ENCODE measurements at regions of chr7 and their contacts with region 1.

Region 1: DNA sequence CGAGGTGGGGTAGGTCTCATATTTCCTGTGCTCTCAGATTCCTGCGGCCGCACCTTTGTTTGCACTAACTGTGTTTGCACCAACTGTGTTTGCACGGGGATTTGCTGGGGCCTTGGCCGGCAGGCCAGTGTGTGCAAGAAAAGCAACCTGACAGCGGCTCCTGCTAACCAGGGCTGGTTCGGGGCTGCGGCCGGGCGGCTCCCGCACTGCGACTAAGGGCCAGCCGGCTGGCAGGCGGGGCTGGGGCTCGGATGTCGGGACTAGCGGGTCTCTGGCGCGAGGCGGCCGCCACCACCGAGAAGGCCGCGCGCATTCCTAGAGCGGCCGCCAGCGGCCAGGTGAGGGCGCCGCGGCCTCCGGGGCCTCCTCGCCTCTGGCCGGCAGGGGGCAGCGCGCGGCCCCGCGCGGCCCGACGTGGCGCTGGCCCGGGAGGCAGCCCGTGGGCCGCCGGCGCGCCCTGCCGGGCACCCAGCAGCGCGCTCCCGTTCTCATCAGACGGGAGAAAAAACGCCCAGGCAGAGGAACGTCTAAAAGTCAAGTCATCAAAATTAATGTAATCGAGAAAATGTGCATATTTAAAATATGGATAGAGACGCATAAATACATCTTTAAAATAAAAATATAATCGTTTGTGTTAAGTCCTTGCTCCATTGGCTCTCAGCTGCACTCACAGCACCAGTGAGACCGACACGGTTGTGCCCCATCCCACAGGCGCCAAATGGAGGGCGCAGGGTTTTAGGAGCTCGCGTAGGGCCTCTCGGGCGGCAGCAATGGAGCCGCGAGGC is 38.5 kb downstream of the ZNF777 start:
- DNase-seq: peak; percentile 72 to 80 (median 76)
- ATAC-seq: peak; percentile 94 to 98 (median 97)
- H3K4me3 ChIP-seq: peak overlapping the region; percentile 43 to 64 (median 55)
- H3K27ac ChIP-seq: peak overlapping the region in 1 of 3 donors; percentile 53
- H3K4me1 ChIP-seq: peaks cover 0 to 6% (median 0%) of the 10 kb centered on the region in 4 donors
- H3K27me3 ChIP-seq: no peaks in the 10 kb centered on the region
- CTCF ChIP-seq: peak; percentile 53 to 99 (median 70)
- POLR2A ChIP-seq: peak; percentile 21

Region 2: DNA sequence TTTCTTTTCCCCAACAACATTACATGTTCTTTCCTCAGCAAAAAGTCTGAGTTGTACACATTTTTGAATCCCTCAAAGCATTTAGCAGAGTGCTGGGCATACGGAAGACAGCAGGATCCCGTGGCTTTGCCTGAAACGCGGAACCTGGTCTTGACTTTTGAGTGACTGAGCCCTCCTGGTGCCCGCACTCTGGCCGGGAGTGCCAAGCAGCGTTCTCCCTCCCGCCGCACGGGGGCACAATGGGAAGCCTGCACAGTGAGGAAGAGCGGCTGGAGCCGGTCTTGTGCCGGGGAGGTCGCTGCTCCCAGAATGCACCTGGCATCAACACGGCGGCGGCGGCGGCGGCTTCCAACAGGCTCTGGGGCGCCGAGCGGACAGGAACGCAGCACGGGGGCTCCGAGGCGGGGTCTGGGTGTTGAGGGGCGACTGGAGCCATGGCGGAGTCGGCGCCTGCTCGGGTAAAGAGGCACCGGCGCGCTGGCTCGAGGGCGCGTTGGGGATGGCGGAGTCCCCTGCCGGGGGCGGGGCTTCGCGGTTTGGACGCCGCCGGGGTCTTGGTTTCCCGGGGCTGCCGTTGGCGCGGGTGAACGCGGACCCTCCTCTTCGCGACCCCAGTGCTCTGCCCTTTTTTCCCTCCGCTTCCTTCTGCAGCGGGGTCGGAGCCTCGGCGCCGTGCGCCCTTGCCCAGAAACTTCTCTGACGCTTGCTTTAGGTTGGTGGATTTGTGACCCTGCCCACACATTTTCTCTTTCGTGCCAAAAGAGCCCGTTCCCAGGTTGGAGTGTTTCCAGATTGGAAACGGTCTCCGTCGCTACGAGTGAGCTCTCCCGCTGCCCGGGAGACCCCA is 182.8 kb before region 1 on chr7 and contains the start of gene ZNF212:
- intact Hi-C with region 1: no loop called
- DNase-seq: peak; percentile 92 to 95 (median 94)
- ATAC-seq: peak; percentile 99 to 100 (median 99)
- H3K4me3 ChIP-seq: peak within 1 kb of the TSS; percentile 93 to 98 (median 95)
- H3K27ac ChIP-seq: peak within 1 kb of the TSS; percentile 61 to 76 (median 62)
- H3K4me1 ChIP-seq: peaks cover 0 to 29% (median 0%) of the 10 kb centered on the region in 4 donors
- H3K27me3 ChIP-seq: no peaks in the 10 kb centered on the region
- CTCF ChIP-seq: peak; percentile 88 to 91 (median 90)
- POLR2A ChIP-seq: peak; percentile 18
- total RNA-seq, gene ZNF212: 2.6 to 5.9 (median 4.7) TPM

Region 3: DNA sequence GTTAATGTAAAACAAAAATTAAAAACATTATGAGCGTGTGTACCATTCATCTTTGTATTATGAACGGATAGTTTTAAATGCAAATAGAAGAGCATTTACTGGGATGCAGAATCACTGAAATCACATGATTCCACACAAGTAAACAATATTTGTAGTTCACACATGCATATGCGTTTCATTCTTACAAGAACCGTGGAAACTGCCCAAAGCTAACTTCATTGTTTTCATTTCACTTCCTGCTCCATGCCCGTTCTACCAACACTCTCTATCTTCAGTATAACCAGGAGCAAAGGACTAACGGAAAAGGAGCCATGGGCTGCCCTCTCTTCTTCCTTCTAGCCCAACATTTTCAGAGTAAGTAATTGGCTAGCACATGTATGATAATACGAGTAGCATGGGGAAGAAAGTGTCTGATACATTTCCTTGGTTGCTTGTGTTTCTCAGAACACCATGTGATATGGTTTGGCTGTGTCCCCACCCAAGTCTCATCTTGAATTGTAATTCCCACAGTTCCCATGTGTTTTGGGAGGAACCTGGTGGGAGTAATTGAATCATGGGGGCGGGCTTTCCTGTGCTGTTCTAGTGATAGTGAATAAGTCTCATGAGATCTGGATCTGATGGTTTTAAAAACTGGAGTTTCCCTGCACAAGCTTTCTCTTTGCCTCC is 121.6 kb before region 1 on chr7:
- intact Hi-C with region 1: loop called in 1 of 2 experiments (anchors 10 kb)
- DNase-seq: no peak
- ATAC-seq: no peak
- H3K4me3 ChIP-seq: no peak overlapping the region
- H3K27ac ChIP-seq: no peak overlapping the region
- H3K4me1 ChIP-seq: no peaks in the 10 kb centered on the region
- H3K27me3 ChIP-seq: no peaks in the 10 kb centered on the region
- CTCF ChIP-seq: no peak
- POLR2A ChIP-seq: no peak

Region 4: DNA sequence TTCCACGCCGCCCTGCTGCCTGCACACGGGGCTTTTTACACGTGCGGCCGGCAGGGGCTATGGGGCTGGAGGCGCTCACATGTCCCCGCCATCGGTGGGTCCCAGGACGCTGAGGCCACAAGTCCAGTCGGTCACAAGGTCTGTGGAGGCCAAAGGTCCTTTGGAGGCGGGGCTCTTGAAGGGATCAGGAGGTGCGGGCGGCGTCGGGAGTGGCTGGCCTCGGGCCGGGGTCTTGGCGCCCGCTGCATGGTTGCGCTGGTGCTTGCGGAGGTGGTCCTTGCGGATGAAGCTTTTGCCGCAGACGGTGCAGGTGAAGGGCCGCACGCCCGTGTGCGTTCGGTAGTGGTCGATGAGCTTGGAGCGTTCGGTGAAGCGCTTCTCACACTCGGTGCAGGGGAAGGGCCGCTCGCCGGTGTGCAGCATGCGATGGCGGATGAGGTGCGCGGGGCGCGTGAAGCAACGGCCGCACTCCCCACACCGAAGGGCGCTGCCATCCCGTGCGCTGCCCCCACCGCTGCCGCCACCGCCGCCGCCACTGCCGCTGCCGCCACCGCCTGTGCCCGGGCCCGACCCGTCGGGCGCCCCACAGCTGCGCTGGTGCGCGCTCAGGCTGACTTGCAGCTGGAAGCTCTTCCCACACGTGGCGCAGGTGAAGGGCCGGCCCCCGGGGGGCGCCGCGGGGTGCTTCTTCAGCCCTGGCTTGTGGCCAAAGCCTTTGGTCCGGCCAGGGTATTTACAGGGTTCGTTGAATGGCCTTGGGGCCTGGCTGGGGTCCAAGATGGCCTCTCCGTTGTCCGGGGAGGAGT is 52.2 kb after region 1 on chr7:
- intact Hi-C with region 1: no loop called
- DNase-seq: no peak
- ATAC-seq: peak in 2 of 4 donors; percentile 7 to 28
- H3K4me3 ChIP-seq: no peak overlapping the region
- H3K27ac ChIP-seq: no peak overlapping the region
- H3K4me1 ChIP-seq: no peaks in the 10 kb centered on the region
- H3K27me3 ChIP-seq: no peaks in the 10 kb centered on the region
- CTCF ChIP-seq: no peak
- POLR2A ChIP-seq: no peak

Measured in right lobe of liver (tissue), 6 donors.